ENCODE measurements at regions of chr3 and their contacts with region 1.

Region 1: DNA sequence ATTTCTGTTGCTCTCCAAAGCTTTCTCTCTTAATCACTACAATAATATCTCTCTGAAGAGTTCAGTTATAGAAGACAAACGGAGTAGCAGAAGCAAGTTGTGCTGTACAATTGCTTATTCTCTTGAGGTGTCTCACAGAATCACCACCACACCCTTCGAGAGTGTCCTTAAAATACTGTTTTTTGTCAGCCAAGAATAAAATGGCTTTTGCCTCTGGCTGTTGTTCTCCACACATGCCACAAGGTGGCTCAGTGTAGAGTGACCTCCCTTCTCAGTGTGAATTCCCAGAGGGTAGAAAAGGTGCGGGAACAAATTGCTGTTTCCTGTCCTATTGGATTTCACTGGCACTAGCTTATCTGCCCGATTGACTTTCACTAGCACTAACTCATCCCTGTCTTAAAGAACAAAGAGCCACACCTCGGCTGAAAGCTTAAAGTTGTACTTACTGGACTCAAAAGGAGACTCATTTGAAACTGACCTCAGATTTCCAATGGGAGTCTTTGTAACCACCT is 134.2 kb upstream of the SATB1 start:
- DNase-seq: peak; percentile 11 to 52 (median 48)
- H3K4me3 ChIP-seq: no peak overlapping the region
- H3K4me3 Mint-ChIP-seq: no peak overlapping the region
- H3K27ac ChIP-seq: no peak overlapping the region
- H3K27ac Mint-ChIP-seq: no peak overlapping the region
- H3K4me1 ChIP-seq: no peaks in the 10 kb centered on the region
- H3K4me1 Mint-ChIP-seq: peaks cover 8% of the 10 kb centered on the region
- H3K27me3 ChIP-seq: no peaks in the 10 kb centered on the region
- H3K27me3 Mint-ChIP-seq: peaks cover 0 to 2% (median 1%) of the 10 kb centered on the region in 3 donors
- CTCF ChIP-seq: peak; percentile 86

Region 2: GRCh38 chr3:18580268-18580667 is 20.9 kb after region 1 on chr3:
- intact Hi-C with region 1: no loop called
- DNase-seq: peak in 1 of 3 donors; percentile 1
- H3K4me3 ChIP-seq: no peak overlapping the region
- H3K4me3 Mint-ChIP-seq: no peak overlapping the region
- H3K27ac ChIP-seq: no peak overlapping the region
- H3K27ac Mint-ChIP-seq: no peak overlapping the region
- H3K4me1 ChIP-seq: peaks cover 0 to 9% of the 10 kb centered on the region in 2 donors
- H3K4me1 Mint-ChIP-seq: peaks cover 13% of the 10 kb centered on the region
- H3K27me3 ChIP-seq: no peaks in the 10 kb centered on the region
- H3K27me3 Mint-ChIP-seq: no peaks in the 10 kb centered on the region
- CTCF ChIP-seq: no peak

Region 3: GRCh38 chr3:18758047-18758704 is 198.8 kb after region 1 on chr3:
- intact Hi-C with region 1: loop called (anchors 5 kb)
- DNase-seq: peak; percentile 55 to 75 (median 74)
- H3K4me3 ChIP-seq: no peak overlapping the region
- H3K4me3 Mint-ChIP-seq: no peak overlapping the region
- H3K27ac ChIP-seq: no peak overlapping the region
- H3K27ac Mint-ChIP-seq: no peak overlapping the region
- H3K4me1 ChIP-seq: no peaks in the 10 kb centered on the region
- H3K4me1 Mint-ChIP-seq: peaks cover 3% of the 10 kb centered on the region
- H3K27me3 ChIP-seq: no peaks in the 10 kb centered on the region
- H3K27me3 Mint-ChIP-seq: peaks cover 0 to 1% (median 1%) of the 10 kb centered on the region in 3 donors
- CTCF ChIP-seq: peak; percentile 94

Region 4: GRCh38 chr3:18772699-18773305 is 213.4 kb after region 1 on chr3:
- intact Hi-C with region 1: loop called in 1 of 2 experiments (anchors 5 kb)
- DNase-seq: no peak
- H3K4me3 ChIP-seq: no peak overlapping the region
- H3K4me3 Mint-ChIP-seq: no peak overlapping the region
- H3K27ac ChIP-seq: no peak overlapping the region
- H3K27ac Mint-ChIP-seq: no peak overlapping the region
- H3K4me1 ChIP-seq: no peaks in the 10 kb centered on the region
- H3K4me1 Mint-ChIP-seq: no peaks in the 10 kb centered on the region
- H3K27me3 ChIP-seq: no peaks in the 10 kb centered on the region
- H3K27me3 Mint-ChIP-seq: peaks cover 0 to 2% (median 0%) of the 10 kb centered on the region in 3 donors
- CTCF ChIP-seq: no peak